K562 (cell line): ENCODE measurements at regions of chr5 and their contacts with region 1.

Region 1: GRCh38 chr5:134527146-134527960 is 1.9 kb downstream of the JADE2 start:
- DNase-seq: peak; percentile 86 to 90 (median 88)
- ATAC-seq: peak; percentile 77
- H3K4me3 ChIP-seq: peak overlapping the region; percentile 80
- H3K27ac ChIP-seq: peak overlapping the region; percentile 87; the same call in 2 of the 3 replicates
- H3K4me1 ChIP-seq: peaks cover 10 to 43% of the 10 kb centered on the region in 2 experiments; a peak in 3 of 5 replicates
- H3K27me3 ChIP-seq: no peaks in the 10 kb centered on the region
- CTCF ChIP-seq: peak; percentile 77 to 89 (median 80)
- EP300 ChIP-seq: no peak
- POLR2A ChIP-seq: no peak; the same call in 1 of the 2 replicates
- RAD21 ChIP-seq: peak; percentile 35 to 44; a peak in 2 of 4 replicates

Region 2: DNA sequence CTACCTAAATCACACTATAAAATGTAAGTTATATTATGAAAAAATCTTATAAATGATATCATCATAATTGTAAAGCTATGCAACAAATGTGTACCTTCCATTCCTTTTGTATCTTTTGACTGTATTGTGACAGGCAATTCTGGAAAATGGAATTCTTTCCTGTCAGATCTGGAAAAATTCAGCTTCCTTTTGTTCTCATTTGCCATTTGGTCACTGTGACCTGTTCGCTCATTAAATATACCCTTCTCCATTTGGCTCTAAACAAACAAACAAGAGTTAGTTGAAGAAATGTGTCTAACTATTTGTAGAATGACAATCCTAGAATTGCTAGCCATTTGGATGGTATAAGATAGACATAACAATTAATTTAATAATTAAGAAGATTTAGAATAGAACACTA is 223.0 kb before region 1 on chr5:
- CTCF ChIA-PET with region 1: interaction called, 6 read pairs
- POLR2A ChIA-PET with region 1: no interaction called
- in situ Hi-C with region 1: no loop called
- intact Hi-C with region 1: loop called (anchors 2 kb)
- DNase-seq: no peak
- ATAC-seq: no peak
- H3K4me3 ChIP-seq: no peak overlapping the region
- H3K27ac ChIP-seq: no peak overlapping the region
- H3K4me1 ChIP-seq: no peaks in the 10 kb centered on the region
- H3K27me3 ChIP-seq: no peaks in the 10 kb centered on the region
- CTCF ChIP-seq: no peak
- EP300 ChIP-seq: no peak
- POLR2A ChIP-seq: no peak
- RAD21 ChIP-seq: no peak

Region 3: GRCh38 chr5:134370871-134371833 is 156.2 kb before region 1 on chr5 and contains the start of gene UBE2B:
- CTCF ChIA-PET with region 1: no interaction called
- POLR2A ChIA-PET with region 1: interaction called, 3 read pairs
- in situ Hi-C with region 1: no loop called
- intact Hi-C with region 1: loop called (anchors 2 kb)
- DNase-seq: peak; percentile 91 to 100 (median 94)
- ATAC-seq: peak; percentile 80
- H3K4me3 ChIP-seq: peak within 1 kb of the TSS; percentile 81
- H3K27ac ChIP-seq: peak within 1 kb of the TSS; percentile 99
- H3K4me1 ChIP-seq: peaks cover 5 to 9% of the 10 kb centered on the region in 2 experiments; a peak in 3 of 5 replicates
- H3K27me3 ChIP-seq: no peaks in the 10 kb centered on the region
- CTCF ChIP-seq: no peak
- EP300 ChIP-seq: peak; percentile 52
- POLR2A ChIP-seq: peak; percentile 65
- RAD21 ChIP-seq: no peak
- polyA plus RNA-seq, gene UBE2B: 165 to 198 TPM

Region 4: DNA sequence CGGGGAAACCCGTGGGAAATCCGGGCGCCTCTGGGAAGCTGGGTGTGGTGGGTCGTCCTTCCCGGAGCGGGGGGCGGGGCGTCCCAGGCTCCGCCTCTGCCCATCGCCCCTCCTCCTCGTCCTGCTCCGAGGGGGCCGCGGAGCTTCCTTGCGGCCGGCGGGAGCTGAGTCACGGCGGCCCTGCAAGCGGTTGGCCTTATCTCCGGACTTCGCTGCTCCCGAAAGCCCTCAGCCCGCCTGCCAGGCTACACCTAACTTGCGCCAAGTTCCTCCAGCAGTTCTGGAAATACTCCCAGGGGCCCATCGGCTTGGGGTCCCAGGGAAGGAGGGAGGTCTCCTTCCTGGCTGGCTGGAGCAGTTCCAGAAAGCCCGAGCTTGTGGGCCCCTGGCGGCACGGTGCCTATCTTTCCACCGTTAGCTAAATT is 61.5 kb before region 1 on chr5:
- CTCF ChIA-PET with region 1: interaction called, 5 read pairs
- POLR2A ChIA-PET with region 1: interaction called, 10 read pairs
- in situ Hi-C with region 1: no loop called
- intact Hi-C with region 1: loop called (anchors 1 kb)
- DNase-seq: peak; percentile 93 to 98 (median 96)
- ATAC-seq: peak; percentile 91
- H3K4me3 ChIP-seq: peak overlapping the region; percentile 46
- H3K27ac ChIP-seq: peak overlapping the region; percentile 99
- H3K4me1 ChIP-seq: peaks cover 32 to 34% of the 10 kb centered on the region in 2 experiments
- H3K27me3 ChIP-seq: no peaks in the 10 kb centered on the region
- CTCF ChIP-seq: no peak
- EP300 ChIP-seq: peak; percentile 89
- POLR2A ChIP-seq: peak; percentile 85
- RAD21 ChIP-seq: no peak; a peak in 1 of 4 replicates

Region 5: DNA sequence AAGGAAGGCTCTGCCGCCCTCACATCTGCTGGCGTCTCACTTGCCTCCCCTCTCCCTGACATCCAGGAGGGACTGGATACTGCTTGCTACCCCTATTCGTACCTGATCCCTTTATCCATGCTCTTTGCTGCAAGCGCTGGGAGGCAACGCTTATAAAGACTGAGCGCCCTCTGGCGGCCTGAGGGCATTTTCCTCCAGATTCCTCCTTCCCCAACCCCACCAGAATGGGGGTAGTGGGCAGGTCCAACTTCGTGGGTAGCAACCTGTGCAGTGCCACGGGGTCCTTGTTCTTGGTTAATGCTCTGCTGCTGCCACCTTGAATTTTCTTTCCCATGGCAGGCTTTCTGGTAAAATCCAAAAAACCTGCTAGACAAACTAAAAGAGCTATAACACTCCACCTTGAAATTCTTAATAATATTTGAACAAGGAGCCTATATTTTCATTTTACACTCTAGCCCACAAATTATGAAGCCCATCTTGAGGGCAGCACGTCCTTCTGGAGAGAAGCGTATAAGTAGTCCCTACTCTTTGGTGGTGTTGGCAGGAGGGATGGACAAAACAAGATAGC is 50.5 kb after region 1 on chr5:
- CTCF ChIA-PET with region 1: no interaction called
- POLR2A ChIA-PET with region 1: interaction called, 3 read pairs
- in situ Hi-C with region 1: no loop called
- intact Hi-C with region 1: loop called (anchors 5 kb)
- DNase-seq: peak; percentile 77 to 85 (median 80)
- ATAC-seq: peak; percentile 93
- H3K4me3 ChIP-seq: no peak overlapping the region
- H3K27ac ChIP-seq: no peak overlapping the region
- H3K4me1 ChIP-seq: peaks cover 0 to 15% of the 10 kb centered on the region in 2 experiments; a peak in 1 of 5 replicates
- H3K27me3 ChIP-seq: no peaks in the 10 kb centered on the region
- CTCF ChIP-seq: peak; percentile 83 to 94 (median 89)
- EP300 ChIP-seq: no peak
- POLR2A ChIP-seq: no peak
- RAD21 ChIP-seq: peak; percentile 74 to 95